ENCODE measurements at regions of chr12 and their contacts with region 1.

Region 1: GRCh38 chr12:119667577-119668323 is at the start of gene PRKAB1:
- DNase-seq: peak; percentile 96
- ATAC-seq: peak; percentile 98
- H3K4me3 ChIP-seq: peak within 1 kb of the TSS; percentile 96 to 98
- H3K27ac ChIP-seq: peak within 1 kb of the TSS; percentile 92
- H3K4me1 ChIP-seq: peaks cover 0 to 11% of the 10 kb centered on the region in 2 experiments; a peak in 1 of 4 replicates
- H3K27me3 ChIP-seq: no peaks in the 10 kb centered on the region
- CTCF ChIP-seq: peak; percentile 76 to 97 (median 91)
- POLR2A ChIP-seq: peak; percentile 43
- RAD21 ChIP-seq: peak; percentile 60
- total RNA-seq, gene PRKAB1: 25.0 TPM

Region 2: DNA sequence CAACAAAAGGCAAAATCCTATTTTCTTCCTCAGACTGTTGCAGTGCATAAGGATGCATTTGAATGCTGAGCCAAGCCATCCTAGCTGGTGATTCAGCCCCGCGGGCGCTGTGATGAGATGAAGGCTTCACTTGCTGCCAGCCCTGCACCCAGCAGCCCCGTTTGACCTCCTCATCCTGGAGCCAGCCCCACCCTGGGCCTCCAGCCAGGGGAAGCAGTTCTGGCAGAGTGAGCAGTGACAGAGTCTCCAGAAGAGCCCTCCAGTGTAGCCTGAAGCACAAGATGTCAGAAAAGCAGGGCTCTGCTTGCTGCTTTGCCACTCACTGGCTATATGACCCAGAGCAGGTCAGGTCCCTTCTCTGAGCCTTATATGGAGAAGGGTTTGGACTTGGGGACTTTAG is 585.3 kb before region 1 on chr12:
- CTCF ChIA-PET with region 1: no interaction called
- POLR2A ChIA-PET with region 1: no interaction called
- RAD21 ChIA-PET with region 1: no interaction called
- intact Hi-C with region 1: no loop called
- DNase-seq: no peak
- ATAC-seq: no peak
- H3K4me3 ChIP-seq: no peak overlapping the region
- H3K27ac ChIP-seq: no peak overlapping the region
- H3K4me1 ChIP-seq: no peaks in the 10 kb centered on the region
- H3K27me3 ChIP-seq: peaks cover 71% of the 10 kb centered on the region
- CTCF ChIP-seq: no peak
- POLR2A ChIP-seq: no peak
- RAD21 ChIP-seq: no peak

Region 3: DNA sequence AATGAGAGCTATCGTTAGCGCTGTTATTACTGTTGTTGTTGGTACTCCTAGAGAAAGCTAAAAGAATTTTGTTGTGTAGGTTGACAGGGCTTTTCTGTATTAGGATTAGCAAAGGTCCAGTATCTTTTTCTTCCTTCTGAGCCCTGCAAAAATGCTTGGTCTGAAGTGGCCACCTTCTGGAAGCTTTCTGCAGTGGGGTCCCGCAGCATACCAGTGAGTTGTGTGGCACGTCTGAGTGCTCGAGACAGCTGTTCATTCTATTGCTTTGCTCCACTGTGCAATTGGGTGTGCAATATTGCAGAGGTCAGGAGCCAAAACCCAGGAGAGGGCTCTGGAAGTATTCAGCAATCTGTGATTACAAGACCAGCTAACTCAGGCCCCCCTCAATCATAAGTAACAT is 276.1 kb before region 1 on chr12:
- CTCF ChIA-PET with region 1: no interaction called
- POLR2A ChIA-PET with region 1: no interaction called
- RAD21 ChIA-PET with region 1: no interaction called
- intact Hi-C with region 1: no loop called
- DNase-seq: no peak
- ATAC-seq: no peak
- H3K4me3 ChIP-seq: no peak overlapping the region
- H3K27ac ChIP-seq: no peak overlapping the region
- H3K4me1 ChIP-seq: no peaks in the 10 kb centered on the region
- H3K27me3 ChIP-seq: peaks cover 32% of the 10 kb centered on the region
- CTCF ChIP-seq: no peak
- POLR2A ChIP-seq: no peak
- RAD21 ChIP-seq: no peak

Region 4: GRCh38 chr12:119505001-119505400 is 162.7 kb before region 1 on chr12:
- CTCF ChIA-PET with region 1: interaction called, 3 read pairs
- POLR2A ChIA-PET with region 1: no interaction called
- RAD21 ChIA-PET with region 1: no interaction called
- intact Hi-C with region 1: loop called (anchors 1 kb)
- DNase-seq: peak; percentile 32
- ATAC-seq: peak; percentile 81
- H3K4me3 ChIP-seq: no peak overlapping the region
- H3K27ac ChIP-seq: no peak overlapping the region
- H3K4me1 ChIP-seq: peaks cover 2 to 17% of the 10 kb centered on the region in 2 experiments; a peak in 2 of 4 replicates
- H3K27me3 ChIP-seq: 0 out of 2 replicates have a peak, but pooled peaks cover 7% of the 10 kb centered on the region
- CTCF ChIP-seq: no peak
- POLR2A ChIP-seq: no peak
- RAD21 ChIP-seq: no peak